BJ (cell line): ENCODE measurements at regions of chr11 and their contacts with region 1.

Region 1: DNA sequence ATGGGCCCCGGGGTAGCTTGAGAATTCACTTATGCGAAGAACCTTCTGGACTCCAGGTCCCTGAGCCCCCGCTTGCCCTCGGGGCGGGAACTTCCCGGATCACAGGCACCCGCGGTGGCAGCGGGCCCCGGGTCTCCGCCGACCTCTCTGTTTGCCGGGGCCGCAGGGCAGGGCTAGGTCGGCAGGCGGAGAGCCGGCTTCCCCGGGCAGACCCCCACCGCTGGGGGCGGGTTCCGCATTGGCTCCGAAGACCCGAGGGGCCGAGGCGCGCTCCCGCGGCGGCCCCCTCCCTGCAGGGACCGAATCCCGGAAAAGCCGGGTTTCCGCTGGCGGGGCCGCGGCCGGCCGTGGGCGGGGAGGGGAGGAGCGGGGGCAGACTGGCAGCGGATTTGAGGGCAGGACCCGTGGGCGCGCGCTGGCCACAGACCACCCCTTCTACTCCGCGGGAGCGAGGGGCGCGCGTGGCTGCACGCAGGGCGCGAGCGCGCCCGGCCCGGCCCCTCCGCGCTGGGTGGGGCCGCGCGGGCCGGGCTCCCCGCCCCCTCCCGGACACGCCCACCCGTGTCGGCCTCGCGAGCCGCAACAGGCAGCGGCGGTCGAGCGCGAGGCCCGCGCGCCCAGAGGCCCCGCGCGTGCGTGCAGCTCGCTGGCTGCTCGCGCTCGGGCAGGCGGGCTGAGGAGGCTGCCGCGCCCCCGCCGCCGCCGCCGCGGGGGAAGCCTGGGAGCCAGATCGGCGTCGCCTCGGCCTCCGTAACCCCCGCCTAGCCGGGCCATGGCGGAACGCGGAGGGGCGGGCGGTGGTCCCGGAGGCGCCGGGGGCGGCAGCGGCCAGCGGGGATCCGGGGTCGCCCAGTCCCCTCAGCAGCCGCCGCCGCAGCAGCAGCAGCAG is at the start of gene PACS1:
- DNase-seq: peak; percentile 26
- H3K4me3 ChIP-seq: peak within 1 kb of the TSS; percentile 84
- H3K27me3 ChIP-seq: no peaks in the 10 kb centered on the region
- CTCF ChIP-seq: no peak
- polyA plus RNA-seq, gene PACS1: 34.3 and 35.8 TPM in 2 replicates

Region 2: DNA sequence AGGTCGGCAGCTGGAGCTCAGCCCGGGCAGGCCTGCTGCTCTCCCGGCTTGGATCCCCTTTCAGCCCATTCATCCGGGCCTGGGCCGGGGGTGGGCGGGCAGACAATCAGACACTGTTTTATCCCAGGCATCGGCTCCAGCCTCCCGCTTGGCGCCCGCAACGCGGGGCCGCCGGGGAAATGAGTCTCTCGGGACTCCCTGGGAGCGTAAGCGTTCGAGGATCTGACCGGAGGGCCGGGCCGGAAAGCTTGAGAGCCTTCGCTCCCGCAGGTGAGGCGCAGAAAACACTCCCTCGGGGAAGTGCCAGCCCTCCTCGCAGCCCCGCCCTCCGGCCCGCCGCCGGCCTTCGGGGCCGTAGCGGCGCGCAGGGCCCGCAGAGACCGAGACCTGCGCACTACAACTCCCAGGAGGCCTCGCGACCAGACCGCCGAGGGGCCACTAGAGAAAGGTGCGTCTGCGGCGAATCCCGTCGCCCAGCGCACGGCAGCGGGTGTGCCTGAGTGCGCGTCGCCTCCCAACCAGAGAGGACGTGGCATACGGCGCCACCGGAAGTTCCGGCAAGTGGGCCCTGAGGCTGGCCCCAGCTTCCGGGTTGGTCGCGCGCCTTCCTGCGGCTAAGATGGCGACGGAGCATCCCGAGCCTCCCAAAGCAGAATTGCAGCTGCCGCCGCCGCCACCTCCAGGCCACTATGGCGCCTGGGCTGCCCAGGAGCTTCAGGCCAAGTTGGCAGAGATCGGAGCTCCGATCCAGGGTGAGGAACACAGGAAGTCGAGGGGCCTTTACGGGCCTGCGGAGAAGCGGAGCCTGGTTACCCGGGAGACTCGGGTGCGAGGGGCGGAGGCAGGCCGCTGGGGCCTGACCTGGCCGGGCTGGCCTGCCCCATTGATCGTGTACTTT is 17.9 kb before region 1 on chr11 and contains the start of gene SF3B2:
- CTCF ChIA-PET with region 1: interaction called, 125 read pairs
- POLR2A ChIA-PET with region 1: interaction called, 4 read pairs
- DNase-seq: peak; percentile 92
- H3K4me3 ChIP-seq: peak within 1 kb of the TSS; percentile 88
- H3K27me3 ChIP-seq: no peaks in the 10 kb centered on the region
- CTCF ChIP-seq: no peak
- polyA plus RNA-seq, gene SF3B2: 70.3 and 82.7 TPM in 2 replicates

Region 3: DNA sequence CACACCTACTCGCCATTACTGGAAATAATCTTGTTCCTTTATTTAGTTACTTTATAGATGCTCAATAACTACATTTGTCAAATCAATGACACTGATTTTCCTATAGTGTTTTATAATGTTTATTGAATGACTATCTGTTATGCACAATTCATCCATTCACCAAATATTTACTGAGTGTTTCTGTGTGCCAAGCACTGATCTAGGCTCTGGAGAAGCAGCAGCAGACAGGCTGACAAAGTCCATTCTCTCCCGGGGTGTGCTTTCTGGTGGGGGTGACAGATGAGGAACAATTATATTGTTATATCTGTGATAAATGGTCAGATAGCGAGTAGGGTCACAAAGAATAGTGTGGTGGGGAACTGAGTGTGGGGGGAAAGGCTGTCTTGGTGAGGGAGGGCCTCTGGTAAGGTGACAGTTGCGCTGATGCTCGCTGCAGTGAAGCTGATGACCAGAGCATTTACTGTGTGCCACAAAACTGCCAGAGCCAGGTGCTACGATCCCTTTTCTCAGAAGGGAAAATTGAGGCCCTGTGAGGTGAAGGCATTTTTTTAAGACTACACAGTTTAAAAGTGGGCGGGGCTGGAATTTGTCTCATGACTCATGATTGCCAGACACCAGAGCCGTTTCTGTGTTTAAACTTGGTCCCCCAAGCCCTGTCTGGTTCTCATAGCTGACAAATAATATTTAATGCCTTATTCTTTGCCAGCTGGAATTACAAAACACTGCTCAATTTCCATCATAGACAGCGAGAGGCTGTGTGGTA is 10.3 kb after region 1 on chr11:
- CTCF ChIA-PET with region 1: interaction called, 12 read pairs
- POLR2A ChIA-PET with region 1: no interaction called
- DNase-seq: peak; percentile 54
- H3K4me3 ChIP-seq: no peak overlapping the region
- H3K27me3 ChIP-seq: no peaks in the 10 kb centered on the region
- CTCF ChIP-seq: no peak

Region 4: GRCh38 chr11:66136752-66137123 is 66.8 kb after region 1 on chr11:
- CTCF ChIA-PET with region 1: interaction called, 35 read pairs
- POLR2A ChIA-PET with region 1: no interaction called
- DNase-seq: no peak
- H3K4me3 ChIP-seq: no peak overlapping the region
- H3K27me3 ChIP-seq: no peaks in the 10 kb centered on the region
- CTCF ChIP-seq: no peak

Region 5: GRCh38 chr11:66545701-66546367 is 475.9 kb after region 1 on chr11 and contains the start of gene ZDHHC24:
- CTCF ChIA-PET with region 1: no interaction called
- POLR2A ChIA-PET with region 1: no interaction called
- DNase-seq: peak; percentile 85
- H3K4me3 ChIP-seq: peak within 1 kb of the TSS; percentile 79
- H3K27me3 ChIP-seq: peaks cover 11% of the 10 kb centered on the region
- CTCF ChIP-seq: no peak
- polyA plus RNA-seq, gene ZDHHC24: 9.1 and 11.9 TPM in 2 replicates